Colonic mucosa (tissue), 4 donors: ENCODE measurements at regions of chr22 and their contacts with region 1.

Region 1: GRCh38 chr22:41237707-41238569 is 2.8 kb downstream of the CHADL start:
- DNase-seq: peak; percentile 82
- H3K4me3 ChIP-seq: peak overlapping the region; percentile 35
- H3K27ac ChIP-seq: no peak overlapping the region
- H3K4me1 ChIP-seq: peaks cover 12% of the 10 kb centered on the region
- H3K27me3 ChIP-seq: no peaks in the 10 kb centered on the region
- CTCF ChIP-seq: peak; percentile 54

Region 2: DNA sequence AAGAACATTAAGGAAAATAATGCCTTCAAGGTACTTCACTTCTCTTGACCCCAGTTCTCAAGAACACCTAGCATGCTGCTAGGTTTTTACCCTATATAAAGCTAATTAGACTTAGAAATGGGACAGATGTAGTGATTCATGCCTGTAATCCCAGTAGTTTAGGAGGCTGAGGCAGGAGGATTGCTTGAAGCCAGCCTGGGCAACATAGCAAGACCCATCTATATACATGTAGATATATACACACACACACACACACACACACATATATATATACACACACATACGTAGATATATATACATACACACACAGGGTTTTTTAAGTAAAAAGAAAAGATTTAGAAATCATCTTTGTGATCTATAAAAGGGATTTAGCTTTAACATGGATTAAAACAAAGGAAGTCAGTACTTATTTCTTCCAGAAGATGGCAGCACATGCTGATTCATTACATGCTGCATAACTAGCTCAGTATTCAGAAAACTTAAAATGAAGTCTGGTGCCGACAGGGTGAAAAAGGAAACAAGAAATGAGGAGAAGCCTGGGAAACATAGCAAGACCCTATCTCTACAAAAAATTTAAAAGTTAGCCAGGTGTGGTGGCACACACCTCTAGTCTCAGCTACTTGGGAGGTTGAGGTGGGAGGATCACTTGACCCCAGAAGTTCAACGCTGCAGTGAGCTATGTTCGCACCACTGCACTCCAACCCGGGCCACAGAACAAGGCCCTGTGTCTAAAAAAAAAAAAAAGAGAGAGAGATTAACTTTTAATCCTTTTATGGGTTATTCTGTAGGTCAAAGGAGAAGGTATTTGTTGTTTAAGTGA is 315.2 kb before region 1 on chr22:
- intact Hi-C with region 1: loop called (anchors 5 kb)
- DNase-seq: no peak
- H3K4me3 ChIP-seq: no peak overlapping the region
- H3K27ac ChIP-seq: no peak overlapping the region
- H3K4me1 ChIP-seq: no peaks in the 10 kb centered on the region
- H3K27me3 ChIP-seq: no peaks in the 10 kb centered on the region
- CTCF ChIP-seq: peak; percentile 72

Region 3: GRCh38 chr22:40950962-40951794 is 286.8 kb before region 1 on chr22 and contains the start of gene RBX1:
- intact Hi-C with region 1: no loop called
- DNase-seq: peak; percentile 98
- H3K4me3 ChIP-seq: peak within 1 kb of the TSS; percentile 67
- H3K27ac ChIP-seq: peak within 1 kb of the TSS; percentile 91
- H3K4me1 ChIP-seq: peaks cover 4% of the 10 kb centered on the region
- H3K27me3 ChIP-seq: no peaks in the 10 kb centered on the region
- CTCF ChIP-seq: no peak
- total RNA-seq, gene RBX1: 37.7 to 46.0 TPM

Region 4: DNA sequence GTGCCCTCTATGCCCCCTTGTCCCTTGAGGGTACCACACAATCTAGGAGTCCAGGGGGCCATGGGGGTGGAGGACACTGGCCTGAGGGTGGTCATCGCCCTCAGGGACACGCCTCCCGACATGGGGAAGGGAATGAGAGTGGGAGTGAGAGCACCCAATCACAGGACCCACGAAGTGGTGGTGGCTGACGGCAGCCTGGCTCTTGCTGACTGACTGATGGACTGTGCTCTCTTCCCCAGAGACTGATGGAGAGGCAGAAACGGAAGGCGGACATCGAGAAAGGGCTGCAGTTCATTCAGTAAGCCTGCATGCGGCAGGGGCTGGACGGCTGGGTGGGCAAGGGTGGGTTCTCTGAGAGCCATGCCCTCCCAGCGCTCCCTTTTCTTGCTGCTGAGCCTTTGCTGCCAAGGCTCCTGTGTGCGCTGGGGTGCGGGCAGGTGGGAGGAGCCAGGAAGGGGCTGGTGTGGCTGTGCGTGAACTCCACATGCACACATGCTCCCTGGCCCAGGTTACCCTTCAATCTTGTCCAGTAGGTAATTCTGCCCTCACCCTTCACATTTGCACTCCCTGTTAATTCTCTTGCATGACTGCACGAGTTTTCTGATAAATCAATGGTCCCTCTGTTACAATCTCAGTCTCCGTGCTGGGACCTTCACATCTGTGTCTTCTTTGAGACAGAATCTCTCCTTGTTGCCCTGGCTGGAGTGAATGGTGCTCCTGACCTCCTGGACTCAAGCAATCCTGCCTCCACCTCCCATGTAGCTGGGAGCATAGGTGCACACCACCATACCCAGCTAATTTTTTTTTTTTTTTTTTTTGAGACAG is 82.7 kb after region 1 on chr22:
- intact Hi-C with region 1: no loop called
- DNase-seq: no peak
- H3K4me3 ChIP-seq: no peak overlapping the region
- H3K27ac ChIP-seq: no peak overlapping the region
- H3K4me1 ChIP-seq: no peaks in the 10 kb centered on the region
- H3K27me3 ChIP-seq: no peaks in the 10 kb centered on the region
- CTCF ChIP-seq: no peak